ENCODE measurements at regions of chrX and their contacts with region 1.

Region 1: DNA sequence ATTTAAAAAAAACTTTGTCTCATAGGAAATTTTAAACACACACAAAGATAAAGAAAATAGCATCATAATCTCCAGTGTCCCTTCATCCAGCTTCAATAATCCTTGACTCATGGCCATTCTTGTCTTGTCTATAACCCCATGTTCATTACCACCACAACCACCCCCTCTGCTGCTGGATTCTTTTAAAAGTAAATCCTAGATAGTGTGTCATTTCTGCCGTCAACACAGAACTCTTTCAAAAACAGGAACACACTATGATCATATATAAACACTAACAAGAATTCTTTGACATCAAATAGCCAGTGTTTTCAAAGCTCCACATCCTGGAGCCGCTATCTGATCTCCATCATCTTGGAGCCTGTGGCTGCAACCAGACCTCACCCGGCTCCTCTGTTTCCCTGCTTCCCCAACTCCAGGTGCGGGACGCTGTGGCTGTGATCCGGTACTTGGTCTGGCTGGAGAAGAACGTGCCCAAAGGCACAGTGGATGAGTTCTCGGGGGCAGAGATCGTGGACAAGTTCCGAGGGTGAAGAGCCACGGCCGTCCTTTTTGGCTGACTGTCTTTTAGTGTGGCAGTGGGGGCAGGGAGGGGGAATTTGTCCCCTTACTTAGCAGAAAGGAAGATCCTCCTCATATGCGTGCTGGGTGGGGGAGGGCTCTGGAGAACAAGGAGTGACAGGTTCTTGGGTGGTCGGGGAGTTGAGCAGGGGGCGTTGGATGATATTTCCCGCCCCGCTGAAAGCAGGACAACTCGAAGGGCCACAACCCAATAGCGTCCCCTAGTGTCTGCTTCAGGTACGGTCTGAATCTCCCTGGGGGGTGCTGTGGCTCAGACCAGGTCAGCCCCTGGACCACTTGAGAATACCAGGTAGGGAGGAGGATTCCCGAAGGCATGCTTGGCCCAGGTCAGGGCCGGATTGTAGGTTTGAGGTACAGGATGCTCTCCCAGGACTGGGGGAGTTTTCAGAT is 15.6 kb downstream of the XPNPEP2 start:
- DNase-seq: peak in 2 of 3 donors; percentile 65 to 70
- H3K4me3 ChIP-seq: peak overlapping the region in 4 of 7 experiments; percentile 36 to 66 (median 44)
- H3K27ac ChIP-seq: no peak overlapping the region
- H3K4me1 ChIP-seq: peaks cover 4 to 46% (median 26%) of the 10 kb centered on the region in 4 experiments
- H3K27me3 ChIP-seq: no peaks in the 10 kb centered on the region

Region 2: DNA sequence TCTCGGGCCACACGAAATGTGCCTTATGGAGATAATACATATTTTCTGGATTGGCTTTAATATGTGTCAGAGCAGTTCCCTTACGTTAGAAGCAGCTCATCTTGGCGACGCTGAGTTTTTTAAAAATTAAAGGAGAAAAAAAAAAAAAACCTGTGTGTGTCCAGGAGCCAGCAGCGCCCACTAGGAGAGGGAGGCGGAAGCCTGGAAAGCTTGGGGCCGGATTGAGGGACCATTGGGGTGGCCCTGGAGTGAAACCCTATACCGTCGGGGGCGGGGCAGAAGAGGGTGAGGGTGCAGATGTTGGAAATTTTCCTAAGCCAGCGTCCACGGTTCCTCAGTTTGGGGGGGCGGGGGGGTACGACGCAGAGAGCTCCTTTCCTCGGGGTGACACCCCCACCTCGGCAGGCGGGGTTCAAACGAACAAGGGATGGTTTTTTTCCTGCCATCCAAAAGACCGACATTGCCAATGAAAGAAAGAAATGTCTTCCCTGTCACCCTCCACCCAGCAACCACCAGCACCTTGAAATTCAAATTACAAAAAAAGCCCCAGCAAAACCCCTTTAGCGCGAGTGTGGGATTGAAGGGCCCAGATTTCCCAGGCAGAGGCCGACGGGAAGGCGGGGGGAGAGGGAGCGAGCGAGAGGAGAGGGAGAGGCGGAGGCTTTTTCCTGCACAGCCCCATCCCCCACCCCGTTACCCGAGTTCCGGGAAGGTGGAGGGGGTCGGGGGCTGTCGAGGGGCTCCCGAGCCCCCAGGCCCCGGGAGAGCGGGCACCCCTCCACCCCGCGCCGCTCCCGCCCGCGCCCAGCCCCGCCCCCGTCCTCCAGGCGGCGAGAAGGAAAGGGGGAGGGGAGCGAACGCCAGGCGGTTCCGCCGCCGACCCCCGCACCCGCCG is 231.9 kb before region 1 on chrX:
- CTCF ChIA-PET with region 1: no interaction called
- POLR2A ChIA-PET with region 1: no interaction called
- DNase-seq: peak in 2 of 3 donors; percentile 8 to 10
- H3K4me3 ChIP-seq: peak overlapping the region; percentile 55 to 83 (median 74)
- H3K27ac ChIP-seq: no peak overlapping the region
- H3K4me1 ChIP-seq: peaks cover 0 to 15% (median 1%) of the 10 kb centered on the region in 4 experiments
- H3K27me3 ChIP-seq: peaks cover 0 to 4% (median 0%) of the 10 kb centered on the region in 5 experiments

Region 3: GRCh38 chrX:129606918-129607317 is 147.4 kb before region 1 on chrX:
- CTCF ChIA-PET with region 1: interaction called, 24 read pairs
- POLR2A ChIA-PET with region 1: no interaction called
- DNase-seq: peak; percentile 58 to 87 (median 78)
- H3K4me3 ChIP-seq: no peak overlapping the region
- H3K27ac ChIP-seq: no peak overlapping the region
- H3K4me1 ChIP-seq: peaks cover 0 to 14% (median 12%) of the 10 kb centered on the region in 4 experiments
- H3K27me3 ChIP-seq: no peaks in the 10 kb centered on the region

Region 4: GRCh38 chrX:129637217-129638109 is 116.9 kb before region 1 on chrX:
- CTCF ChIA-PET with region 1: interaction called, 17 read pairs
- POLR2A ChIA-PET with region 1: no interaction called
- DNase-seq: peak; percentile 53 to 76 (median 67)
- H3K4me3 ChIP-seq: no peak overlapping the region
- H3K27ac ChIP-seq: no peak overlapping the region
- H3K4me1 ChIP-seq: peaks cover 0 to 8% (median 2%) of the 10 kb centered on the region in 4 experiments
- H3K27me3 ChIP-seq: no peaks in the 10 kb centered on the region

Region 5: GRCh38 chrX:129772796-129773431 is 18.6 kb after region 1 on chrX:
- CTCF ChIA-PET with region 1: interaction called, 21 read pairs
- POLR2A ChIA-PET with region 1: interaction called, 4 read pairs
- DNase-seq: peak; percentile 84 to 96 (median 94)
- H3K4me3 ChIP-seq: no peak overlapping the region
- H3K27ac ChIP-seq: peak overlapping the region in 1 of 2 experiments; percentile 52
- H3K4me1 ChIP-seq: peaks cover 20 to 87% (median 81%) of the 10 kb centered on the region in 4 experiments
- H3K27me3 ChIP-seq: no peaks in the 10 kb centered on the region

Region 6: GRCh38 chrX:129823115-129823514 is 68.8 kb after region 1 on chrX:
- CTCF ChIA-PET with region 1: interaction called, 21 read pairs
- POLR2A ChIA-PET with region 1: no interaction called
- DNase-seq: peak; percentile 55 to 75 (median 64)
- H3K4me3 ChIP-seq: no peak overlapping the region
- H3K27ac ChIP-seq: no peak overlapping the region
- H3K4me1 ChIP-seq: peaks cover 0 to 5% (median under 1%) of the 10 kb centered on the region in 4 experiments
- H3K27me3 ChIP-seq: no peaks in the 10 kb centered on the region